ENCODE measurements at regions of chr2 and their contacts with region 1.

Region 1: GRCh38 chr2:41869542-41870264 is 178.1 kb upstream of the PKDCC start:
- DNase-seq: peak; percentile 59
- H3K4me3 ChIP-seq: no peak overlapping the region
- H3K27ac ChIP-seq: no peak overlapping the region
- H3K4me1 ChIP-seq: no peaks in the 10 kb centered on the region
- H3K27me3 ChIP-seq: peaks cover 3 to 4% of the 10 kb centered on the region in 2 experiments
- CTCF ChIP-seq: peak; percentile 68 to 84
- POLR2A ChIP-seq: no peak

Region 2: GRCh38 chr2:41853427-41854216 is 16.1 kb before region 1 on chr2:
- CTCF ChIA-PET with region 1: interaction called, 197 read pairs
- POLR2A ChIA-PET with region 1: no interaction called
- dilution Hi-C with region 1: no loop called
- intact Hi-C with region 1: loop called (anchors 1 kb)
- DNase-seq: peak; percentile 53
- H3K4me3 ChIP-seq: no peak overlapping the region
- H3K27ac ChIP-seq: no peak overlapping the region
- H3K4me1 ChIP-seq: no peaks in the 10 kb centered on the region
- H3K27me3 ChIP-seq: peaks cover 4% of the 10 kb centered on the region in 2 experiments
- CTCF ChIP-seq: peak; percentile 53 to 66
- POLR2A ChIP-seq: no peak

Region 3: GRCh38 chr2:41896186-41896846 is 26.6 kb after region 1 on chr2:
- CTCF ChIA-PET with region 1: interaction called, 11 read pairs
- POLR2A ChIA-PET with region 1: no interaction called
- dilution Hi-C with region 1: no loop called
- intact Hi-C with region 1: no loop called
- DNase-seq: no peak
- H3K4me3 ChIP-seq: no peak overlapping the region
- H3K27ac ChIP-seq: no peak overlapping the region
- H3K4me1 ChIP-seq: no peaks in the 10 kb centered on the region
- H3K27me3 ChIP-seq: peaks cover 3 to 10% of the 10 kb centered on the region in 2 experiments
- CTCF ChIP-seq: no peak
- POLR2A ChIP-seq: no peak

Region 4: GRCh38 chr2:42040643-42041278 is 171.1 kb after region 1 on chr2:
- CTCF ChIA-PET with region 1: interaction called, 17 read pairs
- POLR2A ChIA-PET with region 1: no interaction called
- dilution Hi-C with region 1: no loop called
- intact Hi-C with region 1: no loop called
- DNase-seq: no peak
- H3K4me3 ChIP-seq: no peak overlapping the region
- H3K27ac ChIP-seq: no peak overlapping the region
- H3K4me1 ChIP-seq: no peaks in the 10 kb centered on the region
- H3K27me3 ChIP-seq: peaks cover 7 to 11% of the 10 kb centered on the region in 2 experiments
- CTCF ChIP-seq: no peak
- POLR2A ChIP-seq: no peak

Region 5: GRCh38 chr2:42077343-42077742 is 207.6 kb after region 1 on chr2:
- CTCF ChIA-PET with region 1: interaction called, 625 read pairs
- POLR2A ChIA-PET with region 1: no interaction called
- dilution Hi-C with region 1: loop called (anchors 25 kb)
- intact Hi-C with region 1: no loop called
- DNase-seq: no peak
- H3K4me3 ChIP-seq: no peak overlapping the region
- H3K27ac ChIP-seq: no peak overlapping the region
- H3K4me1 ChIP-seq: no peaks in the 10 kb centered on the region
- H3K27me3 ChIP-seq: peaks cover 3 to 8% of the 10 kb centered on the region in 2 experiments
- CTCF ChIP-seq: no peak
- POLR2A ChIP-seq: no peak

Region 6: DNA sequence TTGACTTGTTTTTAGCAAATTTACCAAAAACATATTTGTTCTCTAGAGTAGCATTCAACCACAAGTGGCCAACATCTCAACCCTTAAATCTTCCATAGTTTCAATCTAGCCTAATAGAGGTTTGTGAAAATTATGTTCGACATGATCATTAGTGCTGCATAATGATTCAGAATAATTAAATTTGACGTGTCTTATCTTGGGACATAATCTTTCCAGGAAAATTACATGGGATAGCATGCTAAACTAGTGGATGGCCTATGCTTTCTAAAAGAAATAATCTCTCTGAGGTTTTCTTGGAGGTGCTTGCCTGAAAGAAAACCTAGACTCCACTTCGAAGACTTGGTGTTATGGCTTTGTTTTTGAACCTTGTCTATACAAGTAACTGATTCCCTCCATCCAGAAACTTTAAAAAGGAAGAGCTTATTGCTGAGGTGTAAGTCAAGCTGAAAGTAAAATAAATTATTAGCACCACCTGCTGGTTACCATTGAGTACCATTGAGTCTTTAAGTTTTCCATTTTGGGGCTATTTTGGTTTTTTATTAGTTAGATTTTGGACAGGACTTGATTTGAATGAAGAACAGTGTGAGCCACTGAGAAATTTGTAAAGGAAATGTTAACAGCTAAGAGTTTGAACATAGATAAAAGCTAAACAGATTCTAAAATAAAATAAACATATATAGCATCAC is 458.6 kb after region 1 on chr2:
- CTCF ChIA-PET with region 1: interaction called, 16 read pairs
- POLR2A ChIA-PET with region 1: no interaction called
- dilution Hi-C with region 1: no loop called
- intact Hi-C with region 1: loop called (anchors 5 kb)
- DNase-seq: peak; percentile 54
- H3K4me3 ChIP-seq: no peak overlapping the region
- H3K27ac ChIP-seq: no peak overlapping the region
- H3K4me1 ChIP-seq: no peaks in the 10 kb centered on the region
- H3K27me3 ChIP-seq: no peaks in the 10 kb centered on the region
- CTCF ChIP-seq: peak; percentile 32 to 36
- POLR2A ChIP-seq: no peak

Region 7: DNA sequence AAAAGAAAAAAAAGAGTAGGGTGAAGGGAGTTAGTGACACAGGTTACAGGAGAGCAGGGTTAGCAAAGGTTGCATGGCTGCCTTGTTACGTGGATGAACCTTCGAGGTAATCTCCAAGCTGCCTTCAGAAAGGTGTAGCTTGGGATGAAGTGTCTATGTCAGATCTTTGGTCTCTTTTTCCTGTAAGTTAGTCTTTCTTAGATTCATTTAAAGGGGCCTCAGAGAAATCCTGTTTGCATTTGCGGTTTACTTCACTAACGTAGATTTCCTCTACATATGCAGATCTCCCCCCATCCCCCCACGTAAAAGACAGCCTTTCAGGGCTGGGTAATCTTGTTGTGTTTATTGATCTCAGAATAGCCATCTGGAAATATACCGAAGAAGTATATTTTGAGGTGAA is 782.4 kb after region 1 on chr2:
- CTCF ChIA-PET with region 1: no interaction called
- POLR2A ChIA-PET with region 1: no interaction called
- dilution Hi-C with region 1: no loop called
- intact Hi-C with region 1: no loop called
- DNase-seq: no peak
- H3K4me3 ChIP-seq: no peak overlapping the region
- H3K27ac ChIP-seq: no peak overlapping the region
- H3K4me1 ChIP-seq: peaks cover 12% of the 10 kb centered on the region
- H3K27me3 ChIP-seq: no peaks in the 10 kb centered on the region
- CTCF ChIP-seq: no peak
- POLR2A ChIP-seq: no peak

Region 8: GRCh38 chr2:43648994-43649701 is 1779.4 kb after region 1 on chr2:
- CTCF ChIA-PET with region 1: no interaction called
- POLR2A ChIA-PET with region 1: no interaction called
- dilution Hi-C with region 1: no loop called
- intact Hi-C with region 1: no loop called
- DNase-seq: no peak
- H3K4me3 ChIP-seq: no peak overlapping the region
- H3K27ac ChIP-seq: no peak overlapping the region
- H3K4me1 ChIP-seq: no peaks in the 10 kb centered on the region
- H3K27me3 ChIP-seq: no peaks in the 10 kb centered on the region
- CTCF ChIP-seq: no peak
- POLR2A ChIP-seq: no peak